CD8-positive, alpha-beta T cell (primary cell): ENCODE measurements at regions of chr7 and their contacts with region 1.

Region 1: GRCh38 chr7:149873074-149873969 is at the start of gene ATP6V0E2:
- DNase-seq: peak; percentile 72 to 95 (median 90)
- ATAC-seq: peak; percentile 73
- H3K4me3 ChIP-seq: peak within 1 kb of the TSS; percentile 70 to 80
- H3K4me3 Mint-ChIP-seq: peak within 1 kb of the TSS; percentile 92
- H3K27ac ChIP-seq: peak within 1 kb of the TSS; percentile 63 to 66
- H3K27ac Mint-ChIP-seq: peak within 1 kb of the TSS; percentile 90
- H3K4me1 ChIP-seq: peaks cover 68% of the 10 kb centered on the region
- H3K4me1 Mint-ChIP-seq: peaks cover 84% of the 10 kb centered on the region
- H3K27me3 ChIP-seq: no peaks in the 10 kb centered on the region
- H3K27me3 Mint-ChIP-seq: no peaks in the 10 kb centered on the region
- CTCF ChIP-seq: no peak
- total RNA-seq, gene ATP6V0E2: 32.9 to 33.5 TPM

Region 2: DNA sequence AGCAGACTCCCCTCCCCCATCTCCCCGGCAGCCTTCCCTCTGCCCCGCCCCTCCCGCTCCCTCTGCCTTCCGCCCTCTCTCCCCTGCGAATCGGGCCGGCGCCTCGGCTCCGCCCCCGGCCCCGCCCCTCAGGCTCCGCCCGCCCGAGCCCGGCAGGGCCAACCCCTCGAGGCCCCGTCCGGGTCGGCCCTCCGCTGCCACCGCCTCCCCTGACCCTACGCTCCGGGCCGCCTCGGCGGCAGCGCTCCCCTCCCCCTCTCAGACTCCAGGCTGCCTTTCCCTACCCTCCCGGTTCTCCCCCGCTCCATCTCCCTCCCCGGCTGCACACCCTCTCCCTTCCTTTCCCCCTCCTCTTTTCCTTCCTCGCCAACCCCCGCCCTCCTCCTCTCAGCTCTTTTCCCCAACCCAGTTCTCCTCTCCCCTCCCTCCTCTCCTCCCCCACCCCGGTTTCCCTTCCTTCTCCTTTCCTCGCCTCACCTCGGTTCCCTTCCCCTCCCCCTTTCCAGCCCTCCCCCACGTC is 101.5 kb before region 1 on chr7:
- CTCF ChIA-PET with region 1: no interaction called
- POLR2A ChIA-PET with region 1: interaction called, 3 read pairs
- intact Hi-C with region 1: loop called (anchors 2 kb)
- DNase-seq: peak; percentile 70 to 91 (median 84)
- ATAC-seq: peak; percentile 88
- H3K4me3 ChIP-seq: peak overlapping the region; percentile 63 to 66
- H3K4me3 Mint-ChIP-seq: peak overlapping the region; percentile 71
- H3K27ac ChIP-seq: no peak overlapping the region
- H3K27ac Mint-ChIP-seq: no peak overlapping the region
- H3K4me1 ChIP-seq: peaks cover 12% of the 10 kb centered on the region
- H3K4me1 Mint-ChIP-seq: peaks cover 6% of the 10 kb centered on the region
- H3K27me3 ChIP-seq: no peaks in the 10 kb centered on the region
- H3K27me3 Mint-ChIP-seq: no peaks in the 10 kb centered on the region
- CTCF ChIP-seq: no peak

Region 3: GRCh38 chr7:149811221-149811620 is 62.1 kb before region 1 on chr7:
- CTCF ChIA-PET with region 1: interaction called, 18 read pairs
- POLR2A ChIA-PET with region 1: no interaction called
- intact Hi-C with region 1: no loop called
- DNase-seq: no peak
- ATAC-seq: no peak
- H3K4me3 ChIP-seq: no peak overlapping the region
- H3K4me3 Mint-ChIP-seq: no peak overlapping the region
- H3K27ac ChIP-seq: no peak overlapping the region
- H3K27ac Mint-ChIP-seq: no peak overlapping the region
- H3K4me1 ChIP-seq: peaks cover 4% of the 10 kb centered on the region
- H3K4me1 Mint-ChIP-seq: peaks cover 11% of the 10 kb centered on the region
- H3K27me3 ChIP-seq: no peaks in the 10 kb centered on the region
- H3K27me3 Mint-ChIP-seq: no peaks in the 10 kb centered on the region
- CTCF ChIP-seq: no peak

Region 4: GRCh38 chr7:149854611-149855360 is 18.5 kb before region 1 on chr7:
- CTCF ChIA-PET with region 1: no interaction called
- POLR2A ChIA-PET with region 1: interaction called, 7 read pairs
- intact Hi-C with region 1: loop called in 1 of 2 experiments (anchors 2 kb)
- DNase-seq: peak in 3 of 9 experiments; percentile 44 to 56 (median 45)
- ATAC-seq: peak; percentile 55
- H3K4me3 ChIP-seq: no peak overlapping the region
- H3K4me3 Mint-ChIP-seq: peak overlapping the region; percentile 29
- H3K27ac ChIP-seq: no peak overlapping the region
- H3K27ac Mint-ChIP-seq: peak overlapping the region; percentile 77
- H3K4me1 ChIP-seq: peaks cover 48% of the 10 kb centered on the region
- H3K4me1 Mint-ChIP-seq: peaks cover 58% of the 10 kb centered on the region
- H3K27me3 ChIP-seq: no peaks in the 10 kb centered on the region
- H3K27me3 Mint-ChIP-seq: no peaks in the 10 kb centered on the region
- CTCF ChIP-seq: no peak

Region 5: DNA sequence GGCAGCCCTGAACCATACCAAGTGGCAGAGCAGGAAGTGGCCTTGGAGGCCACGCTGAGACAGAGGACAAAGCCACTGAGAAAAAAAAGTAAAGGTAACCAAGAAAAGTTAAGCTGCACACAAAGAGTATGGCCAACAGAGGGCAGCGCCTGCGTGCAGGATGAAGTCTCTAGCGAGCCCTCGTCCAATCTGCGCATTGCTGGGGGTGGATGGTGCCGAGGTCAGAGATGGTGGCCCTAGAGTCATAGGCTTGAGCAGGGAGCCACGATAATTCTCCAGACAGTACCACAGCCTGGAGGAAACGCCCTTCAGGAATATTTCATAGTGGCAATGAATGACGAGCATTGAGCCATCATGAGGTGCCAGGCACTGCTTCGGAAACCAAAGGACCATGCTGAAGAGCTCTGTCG is 10.1 kb after region 1 on chr7:
- CTCF ChIA-PET with region 1: interaction called, 29 read pairs
- POLR2A ChIA-PET with region 1: interaction called, 18 read pairs
- intact Hi-C with region 1: no loop called
- DNase-seq: peak in 6 of 9 experiments; percentile 52 to 72 (median 61)
- ATAC-seq: peak; percentile 81
- H3K4me3 ChIP-seq: no peak overlapping the region
- H3K4me3 Mint-ChIP-seq: no peak overlapping the region
- H3K27ac ChIP-seq: no peak overlapping the region
- H3K27ac Mint-ChIP-seq: no peak overlapping the region
- H3K4me1 ChIP-seq: peaks cover 8% of the 10 kb centered on the region
- H3K4me1 Mint-ChIP-seq: peaks cover 19% of the 10 kb centered on the region
- H3K27me3 ChIP-seq: no peaks in the 10 kb centered on the region
- H3K27me3 Mint-ChIP-seq: no peaks in the 10 kb centered on the region
- CTCF ChIP-seq: peak; percentile 56

Region 6: DNA sequence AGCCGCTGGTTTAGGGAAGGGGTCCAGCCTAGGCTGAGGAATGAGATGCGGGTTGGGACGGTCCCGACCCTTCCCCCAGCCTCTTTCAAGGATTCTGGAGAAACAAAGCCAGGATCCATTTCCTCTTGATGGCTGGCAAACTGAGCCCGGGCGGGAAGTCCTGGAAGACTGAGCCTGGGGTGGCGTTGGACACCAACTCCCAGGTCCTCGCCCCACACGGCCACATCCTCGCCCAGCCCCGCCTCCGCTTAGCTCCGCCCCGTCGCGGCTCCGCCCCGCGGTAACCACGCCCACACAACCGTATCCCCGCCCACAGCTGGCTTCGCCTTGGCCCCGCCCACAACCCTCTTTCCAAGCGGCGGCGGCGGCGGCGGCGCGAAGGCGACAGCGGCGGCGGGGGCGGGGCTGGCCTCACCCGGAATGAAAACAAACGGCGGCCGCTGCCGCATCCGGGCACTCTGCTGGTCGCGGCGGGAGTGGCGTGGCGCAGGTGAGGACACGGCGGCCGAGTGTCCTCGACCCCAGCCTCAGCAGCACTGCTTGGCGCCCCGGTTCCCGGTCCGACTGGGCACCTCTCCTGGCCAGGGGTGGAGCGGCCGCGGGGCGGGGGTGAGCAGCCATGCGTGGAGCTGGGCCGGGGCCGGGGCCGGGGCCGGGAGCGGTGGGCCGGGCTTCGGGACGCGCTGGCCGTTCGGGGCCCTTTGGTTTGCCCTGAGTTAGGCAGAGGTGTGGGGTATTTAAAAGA is 1468.2 kb after region 1 on chr7 and contains the start of gene NUB1:
- CTCF ChIA-PET with region 1: no interaction called
- POLR2A ChIA-PET with region 1: no interaction called
- intact Hi-C with region 1: loop called in 1 of 2 experiments (anchors 5 kb)
- DNase-seq: peak; percentile 83 to 98 (median 92)
- ATAC-seq: peak; percentile 91
- H3K4me3 ChIP-seq: peak within 1 kb of the TSS; percentile 68 to 82
- H3K4me3 Mint-ChIP-seq: peak within 1 kb of the TSS; percentile 88
- H3K27ac ChIP-seq: peak within 1 kb of the TSS; percentile 72 to 75
- H3K27ac Mint-ChIP-seq: peak within 1 kb of the TSS; percentile 92
- H3K4me1 ChIP-seq: peaks cover 23% of the 10 kb centered on the region
- H3K4me1 Mint-ChIP-seq: peaks cover 35% of the 10 kb centered on the region
- H3K27me3 ChIP-seq: no peaks in the 10 kb centered on the region
- H3K27me3 Mint-ChIP-seq: no peaks in the 10 kb centered on the region
- CTCF ChIP-seq: no peak
- total RNA-seq, gene NUB1: 78.4 to 81.2 TPM